Tibial artery (tissue), 4 donors: ENCODE measurements at regions of chr11 and their contacts with region 1.

Region 1: GRCh38 chr11:11163236-11163635 is 189.8 kb downstream of the CSNK2A3 start:
- DNase-seq: no peak
- H3K4me3 ChIP-seq: no peak overlapping the region
- H3K27ac ChIP-seq: peak overlapping the region in 1 of 2 donors; percentile 29
- H3K4me1 ChIP-seq: peaks cover 0 to 26% (median 7%) of the 10 kb centered on the region in 4 donors
- H3K27me3 ChIP-seq: no peaks in the 10 kb centered on the region
- CTCF ChIP-seq: peak in 1 of 2 experiments; percentile 33

Region 2: GRCh38 chr11:11400635-11401232 is 237.5 kb after region 1 on chr11:
- intact Hi-C with region 1: loop called (anchors 10 kb)
- DNase-seq: no peak
- H3K4me3 ChIP-seq: no peak overlapping the region
- H3K27ac ChIP-seq: no peak overlapping the region
- H3K4me1 ChIP-seq: peaks cover 0 to 57% (median 12%) of the 10 kb centered on the region in 4 donors
- H3K27me3 ChIP-seq: no peaks in the 10 kb centered on the region
- CTCF ChIP-seq: no peak